Activated naive CD4-positive, alpha-beta T cell treated with anti-CD3 and anti-CD28 coated beads for 36 hours (primary cell): ENCODE measurements at regions of chr15 and their contacts with region 1.

Region 1: DNA sequence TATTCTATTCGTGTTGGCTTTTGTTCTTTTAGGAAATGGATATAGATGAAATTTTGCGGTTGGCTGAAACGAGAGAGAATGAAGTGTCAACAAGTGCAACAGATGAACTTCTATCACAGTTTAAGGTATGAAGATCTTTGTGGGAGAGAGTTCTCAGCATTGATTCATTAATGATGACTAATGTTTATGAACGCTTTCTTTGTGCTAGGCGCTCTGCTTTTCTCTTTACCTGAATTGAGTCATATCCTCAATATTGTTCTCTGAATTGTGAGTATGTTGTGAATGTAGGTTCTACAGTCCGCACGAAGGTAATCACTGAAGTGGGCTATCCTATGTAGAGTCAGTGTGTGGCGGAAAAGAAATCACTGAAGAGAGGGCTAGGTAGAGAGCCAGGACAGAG is 81.2 kb downstream of the CHD2 start:
- DNase-seq: no peak
- H3K4me3 Mint-ChIP-seq: no peak overlapping the region
- H3K27ac Mint-ChIP-seq: no peak overlapping the region
- H3K4me1 Mint-ChIP-seq: peaks cover 8% of the 10 kb centered on the region
- H3K27me3 Mint-ChIP-seq: no peaks in the 10 kb centered on the region

Region 2: DNA sequence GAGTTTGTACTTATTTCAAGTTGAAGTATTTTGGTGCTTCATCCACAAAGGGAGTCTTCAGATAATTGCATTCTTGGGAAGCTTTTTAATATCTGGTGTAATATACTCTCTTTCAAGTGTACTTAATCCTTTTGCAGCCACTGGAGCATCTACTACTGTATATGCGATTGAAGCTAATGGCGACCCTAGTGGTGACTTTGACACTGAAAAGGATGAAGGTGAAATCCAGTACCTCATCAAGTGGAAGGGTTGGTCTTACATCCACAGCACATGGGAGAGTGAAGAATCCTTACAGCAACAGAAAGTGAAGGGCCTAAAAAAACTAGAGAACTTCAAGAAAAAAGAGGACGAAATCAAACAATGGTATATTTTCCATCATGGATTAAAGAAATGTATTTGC is 38.6 kb before region 1 on chr15:
- CTCF ChIA-PET with region 1: interaction called, 3 read pairs
- intact Hi-C with region 1: loop called (anchors 5 kb)
- DNase-seq: no peak
- H3K4me3 Mint-ChIP-seq: no peak overlapping the region
- H3K27ac Mint-ChIP-seq: peak overlapping the region; percentile 43
- H3K4me1 Mint-ChIP-seq: peaks cover 18% of the 10 kb centered on the region
- H3K27me3 Mint-ChIP-seq: no peaks in the 10 kb centered on the region

Region 3: GRCh38 chr15:92958105-92958504 is 23.2 kb before region 1 on chr15:
- CTCF ChIA-PET with region 1: no interaction called
- intact Hi-C with region 1: loop called (anchors 1 kb)
- DNase-seq: peak; percentile 80
- H3K4me3 Mint-ChIP-seq: peak overlapping the region; percentile 20
- H3K27ac Mint-ChIP-seq: peak overlapping the region; percentile 85
- H3K4me1 Mint-ChIP-seq: peaks cover 56% of the 10 kb centered on the region
- H3K27me3 Mint-ChIP-seq: no peaks in the 10 kb centered on the region

Region 4: GRCh38 chr15:93485438-93486327 is 504.4 kb after region 1 on chr15:
- CTCF ChIA-PET with region 1: no interaction called
- intact Hi-C with region 1: no loop called
- DNase-seq: no peak
- H3K4me3 Mint-ChIP-seq: no peak overlapping the region
- H3K27ac Mint-ChIP-seq: no peak overlapping the region
- H3K4me1 Mint-ChIP-seq: no peaks in the 10 kb centered on the region
- H3K27me3 Mint-ChIP-seq: no peaks in the 10 kb centered on the region